Activated CD8-positive, alpha-beta T cell treated with anti-CD3 and anti-CD28 coated beads for 36 hours (primary cell): ENCODE measurements at regions of chr1 and their contacts with region 1.

Region 1: DNA sequence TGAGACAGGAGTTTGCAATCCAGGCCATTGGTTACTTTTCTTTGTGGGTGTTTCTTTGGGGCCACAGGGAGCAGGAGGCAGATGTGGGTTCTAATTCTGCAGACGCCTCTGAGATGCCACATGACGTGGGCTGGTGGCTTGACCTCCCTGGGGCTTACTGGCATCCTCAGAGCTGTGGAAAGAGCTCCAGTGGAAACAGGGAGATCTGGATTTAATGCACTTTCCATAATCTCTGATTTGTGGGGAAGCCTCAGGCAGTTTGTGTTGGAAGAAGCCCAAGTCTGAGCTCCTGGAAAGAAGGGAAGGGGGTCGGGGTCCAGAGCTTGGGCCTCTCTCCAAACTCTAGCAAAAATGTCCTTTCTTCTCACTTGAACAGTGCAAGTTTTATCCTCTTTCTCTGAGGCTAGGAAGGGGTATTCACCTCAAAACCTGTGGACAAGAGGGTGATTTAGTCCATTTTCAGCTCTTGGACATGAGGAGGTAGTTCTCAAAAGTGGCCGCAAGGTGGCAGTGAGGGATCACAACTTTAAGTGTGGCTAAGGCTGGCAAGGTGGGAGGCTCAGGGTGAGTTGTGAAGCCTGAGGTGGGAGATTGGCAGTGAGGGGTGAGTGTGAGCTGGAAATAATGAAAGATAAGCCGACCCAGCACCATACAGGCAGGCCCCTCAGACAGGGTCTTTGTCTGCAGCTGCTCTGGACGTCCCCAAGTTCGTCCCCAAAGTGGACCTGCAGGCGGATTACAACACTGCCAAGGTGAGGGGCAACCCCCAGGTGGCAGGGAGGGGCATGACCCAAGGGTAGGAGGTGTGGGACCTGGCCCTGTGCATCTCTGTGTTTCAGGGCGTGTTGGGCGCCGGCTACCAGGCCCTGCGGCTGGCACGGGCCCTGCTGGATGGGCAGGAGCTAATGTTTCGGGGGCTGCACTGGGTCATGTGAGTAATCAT is 9.2 kb downstream of the IKBKE start:
- DNase-seq: peak; percentile 91
- ATAC-seq: peak; percentile 87
- H3K4me3 Mint-ChIP-seq: no peak overlapping the region
- H3K27ac Mint-ChIP-seq: peak overlapping the region; percentile 60
- H3K4me1 Mint-ChIP-seq: peaks cover 33% of the 10 kb centered on the region
- H3K27me3 Mint-ChIP-seq: no peaks in the 10 kb centered on the region
- CTCF ChIP-seq: peak; percentile 79

Region 2: DNA sequence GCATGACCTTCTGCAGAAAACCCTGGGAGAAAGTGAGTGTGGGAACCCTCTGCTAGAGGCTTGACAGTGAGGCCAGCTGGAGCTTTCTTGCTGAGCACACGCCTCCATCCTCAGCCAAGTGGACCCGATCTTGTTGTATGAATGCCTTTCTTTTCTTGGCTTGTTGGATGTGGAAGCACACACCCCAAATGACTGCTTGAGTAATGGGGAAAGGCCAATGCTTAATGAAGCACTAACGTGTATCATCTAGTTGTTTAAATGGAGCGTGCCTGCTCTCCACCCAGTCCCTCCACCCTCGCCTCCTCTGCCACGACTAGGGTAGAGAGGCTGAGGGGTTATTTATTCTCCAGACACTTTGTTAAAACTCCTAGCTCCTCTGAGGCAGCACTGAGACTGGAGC is 63.5 kb before region 1 on chr1:
- CTCF ChIA-PET with region 1: no interaction called
- POLR2A ChIA-PET with region 1: no interaction called
- intact Hi-C with region 1: no loop called
- DNase-seq: no peak
- ATAC-seq: no peak
- H3K4me3 Mint-ChIP-seq: no peak overlapping the region
- H3K27ac Mint-ChIP-seq: no peak overlapping the region
- H3K4me1 Mint-ChIP-seq: no peaks in the 10 kb centered on the region
- H3K27me3 Mint-ChIP-seq: no peaks in the 10 kb centered on the region
- CTCF ChIP-seq: no peak

Region 3: GRCh38 chr1:206496131-206496793 is 16.8 kb after region 1 on chr1:
- CTCF ChIA-PET with region 1: interaction called, 45 read pairs
- POLR2A ChIA-PET with region 1: interaction called, 4 read pairs
- intact Hi-C with region 1: no loop called
- DNase-seq: no peak
- ATAC-seq: peak; percentile 32
- H3K4me3 Mint-ChIP-seq: no peak overlapping the region
- H3K27ac Mint-ChIP-seq: peak overlapping the region; percentile 79
- H3K4me1 Mint-ChIP-seq: peaks cover 14% of the 10 kb centered on the region
- H3K27me3 Mint-ChIP-seq: no peaks in the 10 kb centered on the region
- CTCF ChIP-seq: no peak

Region 4: DNA sequence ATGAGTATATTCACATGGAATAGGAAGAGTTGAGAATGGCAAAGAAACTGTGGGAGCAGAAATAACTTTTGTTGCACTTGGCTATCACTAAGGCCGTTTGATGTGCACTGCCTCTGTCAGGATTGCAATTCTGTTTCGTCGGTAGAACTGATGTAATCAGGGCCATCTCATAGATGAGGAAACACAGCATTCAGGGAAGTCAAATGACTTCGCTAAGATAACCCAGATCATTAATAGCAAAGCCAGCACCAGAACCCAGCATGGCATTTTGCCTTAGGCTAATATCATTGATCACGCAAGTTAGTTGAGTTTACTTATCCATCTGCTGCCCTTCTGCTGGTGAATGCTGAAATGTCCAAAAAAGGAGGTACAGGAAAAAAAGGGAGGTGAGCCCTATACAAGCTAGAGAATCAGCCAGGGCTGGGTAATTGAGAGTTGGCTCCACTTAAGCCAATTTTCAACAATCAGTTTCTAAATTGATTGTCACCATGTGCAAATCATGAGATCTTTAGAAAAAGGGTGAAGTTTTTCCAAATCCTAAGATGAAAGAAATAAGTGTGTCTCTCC is 35.5 kb after region 1 on chr1:
- CTCF ChIA-PET with region 1: interaction called, 11 read pairs
- POLR2A ChIA-PET with region 1: no interaction called
- intact Hi-C with region 1: no loop called
- DNase-seq: no peak
- ATAC-seq: no peak
- H3K4me3 Mint-ChIP-seq: no peak overlapping the region
- H3K27ac Mint-ChIP-seq: no peak overlapping the region
- H3K4me1 Mint-ChIP-seq: peaks cover 6% of the 10 kb centered on the region
- H3K27me3 Mint-ChIP-seq: peaks cover 6% of the 10 kb centered on the region
- CTCF ChIP-seq: no peak

Region 5: DNA sequence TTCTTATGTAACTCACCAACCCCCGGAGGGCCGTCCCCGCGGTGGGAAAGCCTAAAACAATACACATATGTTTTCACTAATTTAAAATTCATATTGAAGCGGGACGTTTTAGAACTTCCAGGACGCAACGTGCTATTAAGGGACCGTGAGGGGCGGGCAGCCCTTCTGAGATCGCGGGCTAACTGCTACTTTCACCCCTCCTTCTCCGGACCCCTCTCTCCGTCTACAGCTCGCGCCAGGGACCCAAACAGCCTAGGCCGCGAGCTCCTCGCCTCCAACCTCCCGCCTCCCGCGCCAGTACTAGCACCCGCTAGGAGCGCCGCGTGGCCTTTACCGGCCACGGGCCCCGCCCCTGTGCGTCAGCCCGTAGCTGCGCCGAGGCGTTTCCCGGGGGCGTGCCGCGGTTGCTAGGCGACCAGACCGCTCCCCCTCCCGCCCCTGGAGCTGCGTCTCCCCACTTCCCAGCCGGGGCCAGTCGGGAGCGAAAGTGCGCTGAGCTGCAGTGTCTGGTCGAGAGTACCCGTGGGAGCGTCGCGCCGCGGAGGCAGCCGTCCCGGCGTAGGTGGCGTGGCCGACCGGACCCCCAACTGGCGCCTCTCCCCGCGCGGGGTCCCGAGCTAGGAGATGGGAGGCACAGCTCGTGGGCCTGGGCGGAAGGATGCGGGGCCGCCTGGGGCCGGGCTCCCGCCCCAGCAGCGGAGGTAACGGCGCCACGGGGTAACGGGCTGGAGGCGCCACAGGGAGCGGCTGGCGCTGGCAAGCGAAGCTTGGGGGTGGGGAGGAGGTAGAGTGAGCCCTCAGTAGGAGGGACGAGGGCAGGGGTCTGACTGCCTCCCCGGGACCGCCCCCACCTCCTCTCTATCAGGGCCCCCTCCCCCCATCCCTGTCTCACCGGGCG is 155.9 kb after region 1 on chr1 and contains the start of gene DYRK3:
- CTCF ChIA-PET with region 1: interaction called, 13 read pairs
- POLR2A ChIA-PET with region 1: interaction called, 3 read pairs
- intact Hi-C with region 1: no loop called
- DNase-seq: peak; percentile 93
- ATAC-seq: peak; percentile 93
- H3K4me3 Mint-ChIP-seq: peak within 1 kb of the TSS; percentile 78
- H3K27ac Mint-ChIP-seq: peak within 1 kb of the TSS; percentile 88
- H3K4me1 Mint-ChIP-seq: peaks cover 25% of the 10 kb centered on the region
- H3K27me3 Mint-ChIP-seq: peaks cover 28% of the 10 kb centered on the region
- CTCF ChIP-seq: no peak
- total RNA-seq, gene DYRK3: 4.7 to 4.9 TPM

Region 6: DNA sequence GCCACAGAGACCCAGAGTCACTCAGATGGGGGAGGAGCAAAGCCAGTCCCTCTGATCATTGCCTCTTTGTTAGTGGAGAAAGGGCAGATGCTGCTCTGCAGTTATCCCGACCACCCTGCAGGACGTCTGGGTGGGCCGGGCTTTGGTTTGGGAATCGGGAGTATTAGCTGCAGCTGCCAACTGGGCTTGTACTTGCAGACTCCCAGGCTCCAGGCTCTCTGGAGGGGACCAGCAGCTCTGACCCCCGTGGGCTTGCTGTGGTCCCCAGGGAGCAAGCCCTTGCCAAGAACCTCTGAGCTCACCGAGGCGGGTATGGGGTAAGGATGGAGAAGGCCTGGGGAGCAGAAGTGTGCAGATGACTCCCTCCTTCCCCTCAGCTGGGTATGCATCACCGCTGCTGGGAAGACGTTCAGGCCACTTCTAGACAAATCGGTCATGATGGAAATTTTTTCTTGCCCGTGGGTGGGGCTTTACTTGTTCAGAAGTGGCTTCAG is 226.9 kb after region 1 on chr1:
- CTCF ChIA-PET with region 1: no interaction called
- POLR2A ChIA-PET with region 1: no interaction called
- intact Hi-C with region 1: no loop called
- DNase-seq: peak; percentile 84
- ATAC-seq: peak; percentile 49
- H3K4me3 Mint-ChIP-seq: no peak overlapping the region
- H3K27ac Mint-ChIP-seq: peak overlapping the region; percentile 28
- H3K4me1 Mint-ChIP-seq: peaks cover 83% of the 10 kb centered on the region
- H3K27me3 Mint-ChIP-seq: no peaks in the 10 kb centered on the region
- CTCF ChIP-seq: no peak